PC-3 (cell line): ENCODE measurements at regions of chr3 and their contacts with region 1.

Region 1: GRCh38 chr3:5187156-5187919 is at the start of gene EDEM1:
- DNase-seq: peak; percentile 98
- ATAC-seq: peak; percentile 93
- H3K4me3 ChIP-seq: peak within 1 kb of the TSS; percentile 83
- H3K27ac ChIP-seq: peak within 1 kb of the TSS; percentile 64
- H3K4me1 ChIP-seq: peaks cover 30% of the 10 kb centered on the region
- H3K27me3 ChIP-seq: no peaks in the 10 kb centered on the region
- CTCF ChIP-seq: no peak
- total RNA-seq, gene EDEM1: 39.4 and 49.6 TPM in 2 replicates

Region 2: GRCh38 chr3:4406746-4407568 is 780.4 kb before region 1 on chr3:
- CTCF ChIA-PET with region 1: no interaction called
- POLR2A ChIA-PET with region 1: no interaction called
- intact Hi-C with region 1: loop called (anchors 5 kb)
- DNase-seq: peak; percentile 76
- ATAC-seq: peak; percentile 86
- H3K4me3 ChIP-seq: no peak overlapping the region; the same call in 1 of the 2 replicates
- H3K27ac ChIP-seq: peak overlapping the region; percentile 91
- H3K4me1 ChIP-seq: peaks cover 53% of the 10 kb centered on the region
- H3K27me3 ChIP-seq: no peaks in the 10 kb centered on the region
- CTCF ChIP-seq: no peak

Region 3: DNA sequence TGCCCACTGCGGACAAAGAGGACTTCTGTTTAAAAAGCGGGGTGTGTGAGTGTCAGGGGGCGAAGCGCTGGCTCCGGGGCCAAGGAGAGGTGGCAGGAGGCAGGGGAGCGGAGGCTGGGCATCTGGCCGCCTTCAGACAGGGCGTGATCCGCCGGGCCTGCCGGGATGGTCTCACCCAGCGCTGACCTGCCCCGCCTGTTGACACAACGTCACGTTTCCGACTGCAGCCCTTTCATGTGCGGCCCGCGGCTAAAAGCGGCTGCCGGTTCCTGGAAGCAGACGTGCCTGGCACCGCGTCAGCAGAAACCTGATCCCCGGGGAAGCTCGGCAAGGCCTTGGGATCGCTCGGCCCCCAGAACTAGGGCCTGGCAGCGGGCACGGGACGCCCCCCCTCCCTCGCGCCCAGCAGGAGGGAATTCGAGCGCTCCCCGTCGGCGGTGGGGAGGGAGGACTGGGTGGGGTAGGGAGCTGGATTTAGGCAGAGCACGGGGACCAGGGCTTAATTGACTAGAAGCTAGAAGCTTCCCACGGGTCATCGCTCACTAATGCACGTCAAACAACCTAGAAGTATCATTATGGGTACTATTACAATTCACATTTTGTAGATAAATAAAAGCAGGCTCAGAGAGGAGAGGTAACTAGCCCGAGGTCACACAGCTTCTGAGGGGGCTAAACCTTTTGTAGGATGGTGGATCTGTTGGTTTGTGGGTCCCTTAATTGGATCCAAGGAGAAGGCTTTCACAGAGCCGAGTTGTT is 200.4 kb before region 1 on chr3:
- CTCF ChIA-PET with region 1: no interaction called
- POLR2A ChIA-PET with region 1: no interaction called
- intact Hi-C with region 1: loop called (anchors 5 kb)
- DNase-seq: peak; percentile 98
- ATAC-seq: peak; percentile 69
- H3K4me3 ChIP-seq: peak overlapping the region; percentile 35; the same call in 1 of the 2 replicates
- H3K27ac ChIP-seq: peak overlapping the region; percentile 90
- H3K4me1 ChIP-seq: peaks cover 63% of the 10 kb centered on the region
- H3K27me3 ChIP-seq: no peaks in the 10 kb centered on the region
- CTCF ChIP-seq: 0 out of 2 replicates have a peak, but pooled peaks have one; percentile 25

Region 4: DNA sequence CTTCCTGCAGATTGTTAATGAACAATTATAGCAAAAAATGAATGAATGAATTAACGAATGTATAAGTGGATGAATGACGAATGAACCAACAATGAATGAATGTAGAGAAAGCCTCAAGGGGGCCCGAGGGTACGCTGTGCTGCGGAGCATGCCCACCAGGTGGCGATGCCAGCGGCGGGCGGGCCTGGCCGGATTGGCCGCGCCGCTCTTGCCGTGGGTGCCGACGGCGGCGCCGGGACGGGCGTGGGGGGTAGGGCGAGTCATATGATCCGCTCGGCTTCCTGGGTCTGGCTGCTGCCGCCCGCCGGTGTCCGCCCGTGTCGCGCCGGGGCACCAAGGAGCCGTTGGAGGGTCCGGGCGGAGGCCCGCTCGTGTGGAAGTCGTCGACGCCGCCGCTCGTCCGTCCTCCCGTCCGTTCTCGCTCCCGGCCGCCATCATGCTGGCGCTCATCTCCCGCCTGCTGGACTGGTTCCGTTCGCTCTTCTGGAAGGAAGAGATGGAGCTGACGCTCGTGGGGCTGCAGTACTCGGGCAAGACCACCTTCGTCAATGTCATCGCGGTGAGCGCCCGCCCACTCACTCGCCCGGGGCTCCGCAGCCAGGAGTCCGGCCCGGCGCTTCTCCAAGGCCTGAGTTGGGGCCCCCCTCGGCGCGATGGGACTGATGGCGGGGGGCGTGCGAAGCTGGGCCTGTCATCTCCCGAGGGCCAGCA is 65.2 kb before region 1 on chr3 and contains the start of gene ARL8B:
- CTCF ChIA-PET with region 1: no interaction called
- POLR2A ChIA-PET with region 1: interaction called, 5 read pairs
- intact Hi-C with region 1: loop called (anchors 1 kb)
- DNase-seq: peak; percentile 94
- ATAC-seq: peak; percentile 86
- H3K4me3 ChIP-seq: peak within 1 kb of the TSS; percentile 93
- H3K27ac ChIP-seq: peak within 1 kb of the TSS; percentile 78
- H3K4me1 ChIP-seq: peaks cover 31% of the 10 kb centered on the region
- H3K27me3 ChIP-seq: no peaks in the 10 kb centered on the region
- CTCF ChIP-seq: peak; percentile 98
- total RNA-seq, gene ARL8B: 43.8 and 45.3 TPM in 2 replicates

Region 5: GRCh38 chr3:5136211-5136918 is 51.0 kb before region 1 on chr3:
- CTCF ChIA-PET with region 1: interaction called, 3 read pairs
- POLR2A ChIA-PET with region 1: no interaction called
- intact Hi-C with region 1: loop called (anchors 5 kb)
- DNase-seq: peak; percentile 35
- ATAC-seq: peak; percentile 48
- H3K4me3 ChIP-seq: no peak overlapping the region
- H3K27ac ChIP-seq: no peak overlapping the region
- H3K4me1 ChIP-seq: peaks cover 28% of the 10 kb centered on the region
- H3K27me3 ChIP-seq: no peaks in the 10 kb centered on the region
- CTCF ChIP-seq: peak; percentile 66